Adrenal gland (tissue), 19 donors: ENCODE measurements at regions of chrX and their contacts with region 1.

Region 1: GRCh38 chrX:130079824-130080406 is 30.4 kb downstream of the ELF4 start:
- DNase-seq: peak; percentile 52 to 85 (median 66)
- H3K4me3 ChIP-seq: no peak overlapping the region
- H3K27ac ChIP-seq: no peak overlapping the region
- H3K4me1 ChIP-seq: peaks cover 0 to 5% of the 10 kb centered on the region in 2 donors
- H3K27me3 ChIP-seq: no peaks in the 10 kb centered on the region
- CTCF ChIP-seq: peak; percentile 53 to 74 (median 66)
- POLR2A ChIP-seq: no peak

Region 2: DNA sequence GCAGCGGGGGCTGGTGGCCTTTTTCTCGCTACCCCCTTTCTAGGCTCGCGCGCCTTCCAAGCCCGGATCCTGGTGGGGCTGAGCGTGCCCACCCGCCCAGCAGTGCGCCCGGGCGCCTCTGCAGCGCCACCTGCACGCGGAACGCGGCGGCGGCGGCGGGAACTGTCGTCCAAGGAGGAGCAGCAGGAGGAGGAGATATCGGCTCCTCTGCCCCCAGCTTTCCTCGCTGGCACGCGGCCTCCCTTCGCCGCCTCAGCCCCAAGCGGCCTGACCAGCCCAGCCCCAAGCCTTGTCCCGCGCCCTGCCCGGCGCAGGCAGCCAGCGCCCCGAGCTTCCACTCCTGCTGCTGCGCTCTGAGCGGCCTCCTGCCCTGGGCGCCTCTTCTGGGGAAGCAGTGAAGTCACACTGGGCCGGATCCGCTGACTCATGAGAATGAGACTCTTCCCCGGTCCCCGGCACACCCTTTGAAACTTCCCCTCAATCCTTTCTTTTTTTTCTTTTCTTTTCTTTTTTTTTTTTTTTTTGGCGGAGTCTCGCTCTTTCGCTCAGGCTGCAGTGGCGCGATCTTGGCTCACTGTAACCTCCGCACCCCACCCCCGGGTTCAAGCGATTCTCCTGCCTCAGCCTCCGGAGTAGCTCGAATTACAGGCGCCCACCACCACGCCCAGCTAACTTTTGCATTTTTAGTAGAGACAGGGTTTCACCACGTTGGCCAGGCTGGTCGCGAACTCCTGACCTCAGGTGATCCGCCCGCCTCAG is 41.0 kb after region 1 on chrX:
- intact Hi-C with region 1: loop called in 1 of 2 experiments (anchors 5 kb)
- DNase-seq: peak; percentile 64 to 86 (median 82)
- H3K4me3 ChIP-seq: peak overlapping the region in 1 of 4 donors; percentile 42
- H3K27ac ChIP-seq: peak overlapping the region in 4 of 5 donors; percentile 32 to 86 (median 60)
- H3K4me1 ChIP-seq: no peaks in the 10 kb centered on the region
- H3K27me3 ChIP-seq: no peaks in the 10 kb centered on the region
- CTCF ChIP-seq: peak; percentile 36 to 70 (median 65)
- POLR2A ChIP-seq: peak in 1 of 2 donors; percentile 38

Region 3: DNA sequence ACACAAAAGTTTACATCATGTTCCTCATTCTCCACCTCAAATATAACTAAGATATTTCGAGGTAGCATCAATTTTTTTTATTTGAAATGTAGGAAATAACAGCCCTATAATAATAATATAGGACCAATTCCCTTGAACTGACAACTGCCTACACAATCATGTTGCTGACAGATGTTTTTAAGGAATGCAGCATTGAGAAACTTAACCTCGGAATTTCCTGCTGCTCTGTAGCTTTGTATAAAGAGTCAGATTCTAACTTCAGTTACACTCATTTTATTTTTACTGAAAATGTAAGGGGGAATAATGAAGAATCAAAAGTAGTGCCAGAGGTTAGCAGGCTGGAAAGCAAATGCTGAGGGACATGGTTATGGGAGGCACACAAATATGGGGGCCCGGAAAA is 557.7 kb after region 1 on chrX:
- intact Hi-C with region 1: no loop called
- DNase-seq: no peak
- H3K4me3 ChIP-seq: no peak overlapping the region
- H3K27ac ChIP-seq: no peak overlapping the region
- H3K4me1 ChIP-seq: no peaks in the 10 kb centered on the region
- H3K27me3 ChIP-seq: no peaks in the 10 kb centered on the region
- CTCF ChIP-seq: no peak
- POLR2A ChIP-seq: no peak